GM23248 (cell line): ENCODE measurements at regions of chr12 and their contacts with region 1.

Region 1: GRCh38 chr12:10320643-10321042 is 13.0 kb downstream of the KLRD1 start:
- DNase-seq: no peak
- H3K4me3 ChIP-seq: no peak overlapping the region
- H3K27ac ChIP-seq: no peak overlapping the region
- H3K4me1 ChIP-seq: no peaks in the 10 kb centered on the region
- H3K27me3 ChIP-seq: no peaks in the 10 kb centered on the region

Region 2: DNA sequence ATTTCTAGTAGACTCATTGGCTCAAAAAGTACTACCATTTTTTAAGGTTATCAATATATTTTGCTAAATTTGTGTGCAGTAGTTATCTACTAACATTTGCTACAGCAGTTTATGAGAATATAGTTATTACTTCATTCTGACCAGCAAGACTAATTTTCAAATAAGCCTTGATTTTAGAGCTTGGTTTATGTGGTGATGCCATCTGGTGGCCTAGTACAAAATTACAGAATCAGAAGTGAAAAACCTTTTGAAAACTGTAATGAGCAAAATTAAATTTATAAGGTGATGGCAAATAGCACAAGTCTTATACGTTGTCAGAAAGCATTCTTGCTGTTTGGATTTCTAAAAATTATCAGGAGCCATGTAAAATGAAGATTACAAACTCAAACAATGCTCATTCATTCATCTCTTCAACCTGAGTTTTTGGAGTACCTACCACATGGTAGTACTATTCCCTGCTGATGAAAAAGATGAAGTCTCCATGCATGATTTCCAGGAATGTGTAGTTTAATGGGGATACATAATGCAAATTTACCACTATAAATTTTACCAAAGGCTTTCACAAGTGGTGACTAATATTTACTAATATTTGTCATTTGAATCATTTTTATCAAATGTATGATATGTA is 241.8 kb after region 1 on chr12:
- in situ Hi-C with region 1: loop called (anchors 10 kb)
- DNase-seq: peak; percentile 53
- H3K4me3 ChIP-seq: no peak overlapping the region
- H3K27ac ChIP-seq: no peak overlapping the region
- H3K4me1 ChIP-seq: peaks cover 7% of the 10 kb centered on the region
- H3K27me3 ChIP-seq: no peaks in the 10 kb centered on the region